GM12878 (cell line): ENCODE measurements at regions of chr4 and their contacts with region 1.

Region 1: DNA sequence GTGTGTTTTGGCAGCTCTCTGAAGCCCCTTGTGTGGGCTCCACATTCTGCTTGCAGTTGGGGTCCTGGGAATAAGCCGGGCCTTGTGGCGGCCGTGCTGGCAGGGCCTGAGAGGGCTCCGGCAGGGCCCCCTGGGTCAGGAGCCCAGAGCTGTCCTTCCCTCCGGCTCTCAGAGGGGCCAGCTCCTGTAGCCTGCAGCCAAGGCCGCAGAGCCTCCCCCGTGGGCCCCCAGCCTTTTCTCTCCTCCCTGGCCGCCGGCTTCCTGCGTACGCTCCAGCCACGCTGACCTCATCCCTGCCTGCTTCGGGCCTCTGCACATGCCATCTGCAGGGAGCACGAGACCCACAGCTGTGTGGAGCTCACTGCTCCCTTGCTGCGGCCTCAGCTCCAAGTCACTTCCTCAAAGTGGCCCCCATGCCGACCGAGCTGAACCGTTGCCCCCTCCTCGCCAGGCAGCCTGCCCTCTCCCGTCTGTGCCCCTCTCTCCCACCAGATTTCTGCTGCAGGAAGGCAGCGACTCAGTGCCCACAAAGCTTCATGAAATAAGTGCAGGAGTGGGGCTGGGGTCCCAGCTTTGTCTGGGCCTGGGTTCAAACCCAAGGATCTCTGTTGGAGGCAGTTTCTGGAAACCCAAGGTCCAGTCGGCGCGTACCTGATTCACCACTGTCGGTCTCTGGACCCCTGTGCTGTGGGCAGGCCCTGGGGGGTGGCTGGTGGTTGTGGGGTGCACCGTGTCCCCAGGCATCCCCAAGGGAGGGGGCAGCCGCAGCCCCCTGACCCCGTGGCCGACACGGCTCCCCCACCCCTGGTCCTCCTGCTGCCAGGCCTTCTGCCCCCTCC is 57.1 kb upstream of the NKX1-1 start:
- DNase-seq: no peak
- ATAC-seq: no peak
- H3K4me3 ChIP-seq: no peak overlapping the region
- H3K27ac ChIP-seq: no peak overlapping the region
- H3K4me1 ChIP-seq: no peaks in the 10 kb centered on the region
- H3K27me3 ChIP-seq: no peaks in the 10 kb centered on the region
- CTCF ChIP-seq: no peak
- EP300 ChIP-seq: no peak
- POLR2A ChIP-seq: no peak
- RAD21 ChIP-seq: no peak

Region 2: DNA sequence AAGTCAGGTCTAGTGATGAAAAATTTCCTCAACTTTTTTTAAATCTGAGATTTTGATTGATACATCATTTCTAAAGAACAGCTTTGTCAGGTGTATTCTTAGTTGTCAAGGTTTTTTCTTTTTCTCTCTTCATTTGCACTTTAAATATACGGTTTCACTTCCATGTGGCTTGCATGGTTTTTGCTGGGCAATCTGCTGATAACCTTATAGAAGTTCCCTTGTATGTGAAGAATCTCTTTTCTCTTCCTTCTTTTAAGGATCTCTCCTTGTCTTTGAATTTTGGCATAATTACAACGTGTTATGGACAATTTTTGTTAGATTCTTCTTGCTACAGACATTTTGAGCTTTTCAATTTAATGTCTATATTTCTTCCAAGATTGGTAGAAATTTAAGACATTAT is 1040.7 kb before region 1 on chr4:
- CTCF ChIA-PET with region 1: no interaction called
- POLR2A ChIA-PET with region 1: no interaction called
- RAD21 ChIA-PET with region 1: no interaction called
- SMC1A ChIA-PET with region 1: no interaction called
- in situ Hi-C with region 1: loop called (anchors 10 kb)
- intact Hi-C with region 1: no loop called
- DNase-seq: no peak
- ATAC-seq: no peak
- H3K4me3 ChIP-seq: no peak overlapping the region
- H3K27ac ChIP-seq: no peak overlapping the region
- H3K4me1 ChIP-seq: no peaks in the 10 kb centered on the region
- H3K27me3 ChIP-seq: no peaks in the 10 kb centered on the region
- CTCF ChIP-seq: no peak
- EP300 ChIP-seq: no peak
- POLR2A ChIP-seq: no peak
- RAD21 ChIP-seq: no peak

Region 3: GRCh38 chr4:1403591-1404572 is 59.4 kb before region 1 on chr4:
- CTCF ChIA-PET with region 1: no interaction called
- POLR2A ChIA-PET with region 1: no interaction called
- RAD21 ChIA-PET with region 1: no interaction called
- SMC1A ChIA-PET with region 1: no interaction called
- in situ Hi-C with region 1: loop called (anchors 10 kb)
- intact Hi-C with region 1: no loop called
- DNase-seq: no peak
- ATAC-seq: no peak
- H3K4me3 ChIP-seq: no peak overlapping the region
- H3K27ac ChIP-seq: no peak overlapping the region
- H3K4me1 ChIP-seq: no peaks in the 10 kb centered on the region
- H3K27me3 ChIP-seq: no peaks in the 10 kb centered on the region
- CTCF ChIP-seq: no peak
- EP300 ChIP-seq: no peak
- POLR2A ChIP-seq: no peak
- RAD21 ChIP-seq: no peak

Region 4: DNA sequence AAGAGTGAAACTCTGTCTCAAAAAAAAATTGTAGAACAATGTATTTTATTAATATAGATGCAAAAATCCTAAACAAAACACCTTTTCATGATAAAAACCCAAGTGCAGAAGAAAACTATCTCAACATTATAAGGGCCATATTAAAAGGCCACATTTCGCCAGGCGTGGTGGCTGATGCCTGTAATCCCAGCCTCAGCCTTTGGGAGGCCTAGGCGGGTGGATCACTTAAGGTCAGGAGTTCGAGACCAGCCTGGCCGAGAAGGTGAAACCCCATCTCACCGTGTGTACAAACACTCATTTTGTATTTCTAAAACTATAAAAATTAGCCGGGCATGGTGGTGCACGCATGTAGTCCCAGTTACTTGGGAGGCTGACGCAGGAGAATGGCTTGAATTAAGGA is 1063.3 kb after region 1 on chr4:
- CTCF ChIA-PET with region 1: no interaction called
- POLR2A ChIA-PET with region 1: no interaction called
- RAD21 ChIA-PET with region 1: no interaction called
- SMC1A ChIA-PET with region 1: no interaction called
- in situ Hi-C with region 1: no loop called
- intact Hi-C with region 1: no loop called
- DNase-seq: no peak
- ATAC-seq: no peak
- H3K4me3 ChIP-seq: no peak overlapping the region
- H3K27ac ChIP-seq: no peak overlapping the region
- H3K4me1 ChIP-seq: no peaks in the 10 kb centered on the region
- H3K27me3 ChIP-seq: no peaks in the 10 kb centered on the region
- CTCF ChIP-seq: no peak
- EP300 ChIP-seq: no peak
- POLR2A ChIP-seq: no peak
- RAD21 ChIP-seq: no peak